ENCODE measurements at regions of chr17 and their contacts with region 1.

Region 1: GRCh38 chr17:31842183-31843069 is 16.6 kb downstream of the COPRS start:
- DNase-seq: peak; percentile 61 to 86 (median 69)
- H3K4me3 ChIP-seq: peak overlapping the region in 1 of 4 donors; percentile 15
- H3K27ac ChIP-seq: peak overlapping the region in 2 of 5 donors; percentile 24 to 49
- H3K4me1 ChIP-seq: peaks cover 11 to 15% of the 10 kb centered on the region in 2 donors
- H3K27me3 ChIP-seq: no peaks in the 10 kb centered on the region
- CTCF ChIP-seq: peak; percentile 94 to 98 (median 96)
- POLR2A ChIP-seq: no peak

Region 2: GRCh38 chr17:31437720-31438420 is 404.6 kb before region 1 on chr17:
- intact Hi-C with region 1: loop called (anchors 2 to 5 kb)
- DNase-seq: no peak
- H3K4me3 ChIP-seq: no peak overlapping the region
- H3K27ac ChIP-seq: no peak overlapping the region
- H3K4me1 ChIP-seq: no peaks in the 10 kb centered on the region
- H3K27me3 ChIP-seq: no peaks in the 10 kb centered on the region
- CTCF ChIP-seq: no peak
- POLR2A ChIP-seq: no peak

Region 3: DNA sequence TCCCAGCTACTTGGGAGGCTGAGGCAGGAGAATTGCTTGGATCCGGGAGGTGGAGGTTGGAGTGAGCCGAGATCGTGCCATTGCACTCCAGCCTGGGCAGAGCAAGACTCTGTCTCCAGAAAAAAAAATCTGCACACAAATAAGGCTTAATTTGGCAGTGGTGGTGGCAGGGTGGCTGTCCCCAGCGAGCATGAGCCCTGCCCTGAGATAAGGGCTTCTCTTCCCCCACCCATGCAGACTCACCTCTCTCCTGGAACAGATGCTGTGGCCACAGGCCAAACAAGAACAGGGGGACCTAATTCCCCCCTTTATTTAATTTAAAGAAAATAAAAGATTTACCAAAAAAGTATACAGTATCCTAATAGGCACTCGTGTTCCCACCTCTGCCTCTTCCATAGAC is 293.7 kb before region 1 on chr17:
- intact Hi-C with region 1: no loop called
- DNase-seq: no peak
- H3K4me3 ChIP-seq: peak overlapping the region in 1 of 4 donors; percentile 98
- H3K27ac ChIP-seq: peak overlapping the region in 2 of 5 donors; percentile 75 to 85
- H3K4me1 ChIP-seq: peaks cover 0 to 12% of the 10 kb centered on the region in 2 donors
- H3K27me3 ChIP-seq: no peaks in the 10 kb centered on the region
- CTCF ChIP-seq: no peak
- POLR2A ChIP-seq: no peak

Region 4: DNA sequence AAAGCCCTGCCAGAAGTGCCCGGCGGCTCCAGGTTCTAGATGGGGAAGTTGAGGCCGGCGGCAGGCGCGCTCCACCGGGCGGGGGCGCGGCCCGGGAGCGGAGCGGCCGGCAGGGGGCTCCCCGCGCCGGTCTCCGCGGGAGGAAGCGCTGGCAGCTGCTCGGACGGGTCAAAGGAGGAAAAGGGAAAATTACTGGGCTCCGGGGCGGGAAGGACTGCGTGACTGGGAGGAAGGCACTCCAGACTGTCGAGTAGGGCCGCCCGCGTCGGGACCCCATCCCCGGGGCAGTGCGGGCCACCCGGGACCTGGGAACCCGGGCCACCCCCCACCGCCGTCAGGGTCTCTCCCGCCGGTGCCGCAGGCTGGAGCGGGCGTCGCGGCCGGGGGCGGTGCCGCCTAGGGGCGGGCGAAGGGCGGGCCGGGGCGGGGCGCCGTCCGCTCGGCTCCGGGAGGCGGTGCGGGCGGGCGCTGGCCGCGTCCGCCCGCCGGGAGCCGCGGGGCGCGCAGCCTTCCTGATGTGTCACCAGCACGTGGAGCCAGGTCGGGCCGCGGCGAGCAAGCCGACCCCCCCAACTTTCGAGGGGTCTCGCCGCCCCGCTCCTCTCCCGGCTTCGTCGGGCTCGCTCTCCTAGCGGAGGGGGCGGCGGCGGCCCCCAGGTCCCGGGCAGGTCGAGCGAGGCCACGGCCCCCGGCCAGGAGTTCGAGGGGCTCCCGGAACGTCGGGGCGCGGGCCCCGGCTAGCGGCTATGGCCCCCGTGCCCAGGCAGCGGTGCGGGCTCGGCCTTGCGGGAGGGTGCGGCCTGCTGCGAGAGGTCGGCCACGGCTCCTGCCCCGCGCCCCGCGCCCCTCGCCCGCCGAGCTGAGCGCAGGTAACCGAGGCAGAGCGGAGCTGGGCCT is 283.4 kb before region 1 on chr17:
- intact Hi-C with region 1: loop called (anchors 2 to 5 kb)
- DNase-seq: peak; percentile 77 to 85 (median 82)
- H3K4me3 ChIP-seq: peak overlapping the region in 3 of 4 donors; percentile 18 to 80 (median 24)
- H3K27ac ChIP-seq: peak overlapping the region in 4 of 5 donors; percentile 54 to 97 (median 79)
- H3K4me1 ChIP-seq: peaks cover 6 to 27% of the 10 kb centered on the region in 2 donors
- H3K27me3 ChIP-seq: no peaks in the 10 kb centered on the region
- CTCF ChIP-seq: peak in 5 of 6 experiments; percentile 28 to 91 (median 87)
- POLR2A ChIP-seq: peak in 1 of 2 donors; percentile 36

Region 5: GRCh38 chr17:31787857-31788570 is 54.4 kb before region 1 on chr17:
- intact Hi-C with region 1: no loop called
- DNase-seq: peak in 1 of 7 donors; percentile 34
- H3K4me3 ChIP-seq: no peak overlapping the region
- H3K27ac ChIP-seq: no peak overlapping the region
- H3K4me1 ChIP-seq: no peaks in the 10 kb centered on the region
- H3K27me3 ChIP-seq: no peaks in the 10 kb centered on the region
- CTCF ChIP-seq: no peak
- POLR2A ChIP-seq: no peak